RWPE1 (cell line): ENCODE measurements at regions of chr2 and their contacts with region 1.

Region 1: GRCh38 chr2:120696850-120697249 is 38.8 kb upstream of the GLI2 start:
- DNase-seq: no peak
- H3K27ac ChIP-seq: no peak overlapping the region
- CTCF ChIP-seq: no peak

Region 2: DNA sequence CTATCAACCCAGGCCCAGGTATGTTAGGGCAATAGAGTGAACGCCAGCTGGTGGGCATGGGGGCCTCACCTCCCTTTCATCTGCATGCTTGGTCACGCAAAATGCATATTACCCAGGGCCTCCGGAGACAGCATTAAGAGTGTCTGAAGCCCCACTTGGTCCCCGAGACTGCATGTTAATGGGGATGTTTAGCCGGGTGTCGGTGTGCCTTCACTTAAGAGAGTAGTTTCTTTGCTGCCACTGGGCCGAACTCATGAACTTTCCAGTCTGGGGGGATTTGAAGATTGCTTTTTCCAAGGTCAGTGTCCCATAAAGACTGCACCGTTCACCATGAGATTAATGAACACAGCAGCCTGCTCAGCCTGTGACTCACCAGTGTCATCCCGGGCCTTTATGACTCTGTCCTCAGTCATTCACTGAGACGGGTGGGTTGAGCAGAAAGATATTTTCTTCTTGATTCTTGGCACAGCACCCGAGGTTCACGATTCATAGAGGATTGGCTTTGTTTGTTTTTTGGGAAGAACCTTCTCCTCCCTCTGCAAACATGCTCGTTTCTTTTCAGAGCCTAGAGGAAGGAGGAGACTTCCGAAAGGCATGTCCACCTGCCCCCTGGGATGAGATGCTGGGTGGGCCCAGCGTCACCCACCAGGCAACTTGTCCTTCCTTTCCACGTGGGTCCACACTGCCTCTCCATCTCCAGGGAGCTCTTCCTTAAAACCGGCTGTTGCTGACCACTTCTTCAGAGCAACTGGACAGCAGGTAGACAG is 237.9 kb after region 1 on chr2:
- CTCF ChIA-PET with region 1: no interaction called
- POLR2A ChIA-PET with region 1: no interaction called
- DNase-seq: peak; percentile 96
- H3K27ac ChIP-seq: peak overlapping the region; percentile 95
- CTCF ChIP-seq: no peak

Region 3: DNA sequence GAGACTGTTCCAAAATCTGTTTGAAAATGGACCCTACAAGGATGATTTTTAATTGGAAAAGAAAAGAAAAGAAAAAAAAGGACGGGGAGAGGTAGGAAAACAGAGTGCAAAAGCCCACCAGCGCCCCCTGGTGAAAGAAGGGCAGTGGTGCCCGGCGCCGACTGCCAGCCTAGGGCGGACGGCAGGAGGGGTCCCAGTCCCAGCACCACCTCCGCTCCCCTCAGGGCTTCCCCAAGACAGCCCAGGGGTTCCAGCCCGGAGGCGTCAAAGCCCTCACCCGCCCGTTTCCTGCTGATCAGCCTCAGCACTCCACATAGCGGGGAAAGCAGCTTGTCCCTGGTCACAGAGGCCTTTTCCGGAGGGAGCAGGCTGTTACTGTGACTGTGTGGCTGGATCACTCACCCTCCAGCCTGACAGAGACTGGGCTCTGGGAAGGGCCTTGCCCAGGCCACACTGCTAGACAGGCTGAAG is 374.2 kb after region 1 on chr2:
- CTCF ChIA-PET with region 1: interaction called, 18 read pairs
- POLR2A ChIA-PET with region 1: no interaction called
- DNase-seq: peak; percentile 71
- H3K27ac ChIP-seq: no peak overlapping the region
- CTCF ChIP-seq: peak; percentile 96

Region 4: DNA sequence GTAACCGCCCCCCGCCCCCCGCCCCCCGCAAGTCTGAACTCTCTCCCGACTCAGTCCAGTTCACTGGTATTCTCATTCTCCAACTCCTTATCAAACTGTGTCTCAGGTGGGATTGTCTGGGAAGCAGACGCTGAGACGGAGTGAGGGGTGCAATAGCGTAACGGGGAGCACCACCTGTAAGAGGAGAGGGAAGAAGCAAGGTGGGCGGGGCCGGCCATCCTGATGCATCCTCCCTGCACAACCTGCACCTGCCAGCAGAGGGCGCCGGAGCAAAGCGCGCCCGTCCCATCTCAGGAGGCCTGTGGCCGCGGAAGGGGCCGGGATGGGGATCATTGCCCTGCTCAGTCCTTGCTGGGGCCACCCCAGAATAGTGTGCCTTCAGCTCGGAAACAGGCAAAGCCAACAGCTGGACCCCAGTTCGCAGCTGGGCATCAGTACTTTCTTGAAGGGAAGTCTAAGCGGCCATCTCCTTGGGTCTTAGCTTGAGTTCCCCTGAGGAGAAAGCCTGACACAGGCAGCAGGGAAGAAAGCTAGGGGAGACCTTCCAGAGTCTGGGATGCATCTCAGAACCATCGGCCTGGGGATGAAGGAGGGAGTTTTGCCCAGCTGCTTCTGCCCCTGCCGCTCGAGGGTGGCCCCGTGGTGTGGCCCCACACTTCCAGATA is 380.2 kb after region 1 on chr2:
- CTCF ChIA-PET with region 1: interaction called, 18 read pairs
- POLR2A ChIA-PET with region 1: no interaction called
- DNase-seq: peak; percentile 72
- H3K27ac ChIP-seq: no peak overlapping the region
- CTCF ChIP-seq: peak; percentile 86

Region 5: DNA sequence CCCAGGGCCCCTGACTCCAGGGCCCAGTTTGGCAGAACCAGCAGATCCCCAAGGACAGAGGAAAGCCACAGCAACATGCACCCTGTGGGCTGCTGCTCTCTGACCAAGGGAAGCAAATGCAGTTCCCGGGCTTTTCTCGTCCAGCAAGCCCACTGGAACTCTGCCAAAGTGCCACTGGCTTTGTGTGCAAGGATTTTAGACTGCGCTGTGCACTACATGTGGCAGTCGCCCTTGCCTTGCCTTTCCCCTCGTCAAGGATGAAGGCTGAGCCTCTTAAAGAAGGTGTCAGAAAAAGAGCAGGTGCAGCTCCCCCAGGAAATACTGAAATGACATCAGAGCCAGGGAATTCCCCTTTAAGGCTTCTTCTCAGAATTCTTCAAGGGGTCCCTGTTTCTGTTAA is 389.0 kb after region 1 on chr2:
- CTCF ChIA-PET with region 1: interaction called, 13 read pairs
- POLR2A ChIA-PET with region 1: no interaction called
- DNase-seq: no peak
- H3K27ac ChIP-seq: no peak overlapping the region
- CTCF ChIP-seq: no peak